Activated B cell treated with CpG ODN at 0.5 μM for 24 hours (primary cell): ENCODE measurements at regions of chr3 and their contacts with region 1.

Region 1: DNA sequence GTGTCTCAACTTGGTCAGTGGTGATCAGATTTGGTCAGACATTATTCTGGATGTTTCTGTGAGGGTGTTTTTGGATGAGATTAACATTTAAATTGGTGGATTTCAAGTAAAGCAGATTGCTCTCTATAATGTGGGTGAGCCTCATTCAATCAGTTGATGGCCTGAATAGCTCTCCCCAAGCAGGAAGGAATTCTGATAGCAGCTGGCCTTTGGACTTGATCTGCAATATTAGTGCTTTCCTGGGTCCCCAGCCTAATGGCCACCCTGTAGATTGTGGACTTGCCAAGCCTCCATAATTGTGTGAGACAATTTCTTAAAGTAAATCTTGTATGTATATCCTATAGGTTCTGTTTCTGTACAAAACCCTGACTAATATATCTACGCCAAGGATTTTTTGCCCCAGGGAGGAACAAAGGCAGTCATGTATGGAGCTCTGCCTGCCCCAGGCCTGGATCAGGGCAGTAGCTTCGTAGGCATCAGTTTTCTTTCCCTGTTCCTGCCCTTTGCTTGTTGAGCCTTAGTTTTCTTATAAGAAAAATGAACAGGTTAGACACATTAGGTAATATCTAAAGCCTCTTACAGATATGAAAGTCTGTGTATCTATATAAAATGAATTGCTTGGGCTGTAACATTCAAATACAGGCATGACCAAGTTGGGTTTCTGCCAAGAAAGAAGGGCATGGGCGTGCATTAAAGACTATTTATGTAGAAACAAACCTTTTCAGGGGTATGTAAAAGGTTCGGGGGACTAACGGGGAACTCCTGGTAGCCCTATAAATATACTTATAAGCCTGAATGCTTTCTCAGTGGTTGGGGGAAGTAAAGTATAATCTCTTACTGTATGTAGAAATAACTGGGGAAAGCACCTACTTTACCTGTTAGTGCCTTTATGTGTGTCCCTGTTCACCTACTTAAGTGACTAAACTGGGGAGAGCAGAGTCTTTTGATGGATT is 154.2 kb upstream of the TBL1XR1 start:
- DNase-seq: no peak
- ATAC-seq: peak; percentile 85
- H3K4me3 Mint-ChIP-seq: peak overlapping the region; percentile 74
- H3K27ac Mint-ChIP-seq: peak overlapping the region; percentile 95
- H3K4me1 Mint-ChIP-seq: peaks cover 82% of the 10 kb centered on the region
- H3K27me3 Mint-ChIP-seq: no peaks in the 10 kb centered on the region
- CTCF ChIP-seq: no peak

Region 2: DNA sequence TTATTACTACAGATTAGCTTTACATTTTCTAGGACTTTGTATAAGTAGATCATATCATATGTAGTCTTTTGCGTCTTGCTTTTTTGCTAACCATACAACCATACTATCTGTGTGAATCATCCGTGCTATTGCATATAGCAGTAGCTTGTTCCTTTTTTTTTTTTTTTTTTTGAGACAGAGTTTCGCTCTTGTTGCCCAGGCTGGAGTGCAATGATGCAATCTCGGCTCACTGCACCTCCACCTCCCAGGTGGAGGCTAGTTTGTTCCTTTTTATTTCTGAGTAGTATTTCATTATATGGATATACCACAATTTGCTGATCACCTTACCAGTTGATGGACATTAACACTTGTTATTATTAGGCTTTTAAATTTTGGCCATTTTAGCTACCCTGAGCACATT is 99.7 kb before region 1 on chr3:
- CTCF ChIA-PET with region 1: interaction called, 4 read pairs
- POLR2A ChIA-PET with region 1: interaction called, 6 read pairs
- intact Hi-C with region 1: loop called (anchors 1 kb)
- DNase-seq: no peak
- ATAC-seq: peak; percentile 64
- H3K4me3 Mint-ChIP-seq: no peak overlapping the region
- H3K27ac Mint-ChIP-seq: peak overlapping the region; percentile 79
- H3K4me1 Mint-ChIP-seq: peaks cover 36% of the 10 kb centered on the region
- H3K27me3 Mint-ChIP-seq: no peaks in the 10 kb centered on the region
- CTCF ChIP-seq: no peak

Region 3: GRCh38 chr3:177314897-177315296 is 36.6 kb before region 1 on chr3:
- CTCF ChIA-PET with region 1: no interaction called
- POLR2A ChIA-PET with region 1: interaction called, 12 read pairs
- intact Hi-C with region 1: loop called (anchors 1 kb)
- DNase-seq: no peak
- ATAC-seq: no peak
- H3K4me3 Mint-ChIP-seq: no peak overlapping the region
- H3K27ac Mint-ChIP-seq: no peak overlapping the region
- H3K4me1 Mint-ChIP-seq: peaks cover 36% of the 10 kb centered on the region
- H3K27me3 Mint-ChIP-seq: no peaks in the 10 kb centered on the region
- CTCF ChIP-seq: no peak

Region 4: GRCh38 chr3:177337541-177338331 is 13.7 kb before region 1 on chr3:
- CTCF ChIA-PET with region 1: interaction called, 5 read pairs
- POLR2A ChIA-PET with region 1: interaction called, 82 read pairs
- intact Hi-C with region 1: loop called (anchors 1 kb)
- DNase-seq: no peak
- ATAC-seq: peak; percentile 82
- H3K4me3 Mint-ChIP-seq: peak overlapping the region; percentile 67
- H3K27ac Mint-ChIP-seq: peak overlapping the region; percentile 98
- H3K4me1 Mint-ChIP-seq: peaks cover 61% of the 10 kb centered on the region
- H3K27me3 Mint-ChIP-seq: no peaks in the 10 kb centered on the region
- CTCF ChIP-seq: no peak